ENCODE measurements at regions of chr2 and their contacts with region 1.

Region 1: DNA sequence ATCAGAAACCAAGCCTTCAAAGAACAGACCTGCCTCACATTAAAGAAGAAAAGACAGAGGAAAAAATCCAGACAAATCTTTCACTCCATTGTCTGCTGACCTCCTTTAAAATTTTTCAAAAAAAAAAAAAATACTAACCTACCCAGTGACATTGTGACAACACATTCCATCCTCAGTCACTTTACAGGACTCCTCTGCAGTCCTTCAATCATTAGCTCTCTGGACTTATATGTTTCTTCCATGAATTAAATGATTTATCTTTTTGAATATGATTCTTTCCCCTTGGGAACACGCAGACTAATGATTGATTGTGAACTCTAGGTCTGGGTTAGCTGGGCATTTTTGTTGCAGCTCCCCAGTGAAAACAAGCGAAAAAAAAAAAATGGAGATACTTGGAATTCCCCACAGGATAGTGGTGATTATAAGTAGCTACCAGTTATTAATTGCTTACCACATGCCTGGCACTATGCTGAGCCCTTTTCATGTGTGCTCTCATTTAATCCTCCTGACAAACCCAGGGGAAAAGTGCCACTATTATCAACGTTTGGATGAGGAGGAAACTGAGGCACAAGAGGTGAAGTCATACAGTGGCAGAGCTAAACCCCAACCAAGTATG is 261.3 kb upstream of the NCKAP5 start:
- DNase-seq: no peak
- ATAC-seq: no peak
- H3K4me3 Mint-ChIP-seq: no peak overlapping the region
- H3K27ac Mint-ChIP-seq: no peak overlapping the region
- H3K4me1 Mint-ChIP-seq: no peaks in the 10 kb centered on the region
- H3K27me3 Mint-ChIP-seq: peaks cover under 1% of the 10 kb centered on the region

Region 2: GRCh38 chr2:133346654-133347053 is 482.9 kb before region 1 on chr2:
- CTCF ChIA-PET with region 1: no interaction called
- POLR2A ChIA-PET with region 1: no interaction called
- intact Hi-C with region 1: no loop called
- DNase-seq: no peak
- ATAC-seq: no peak
- H3K4me3 Mint-ChIP-seq: no peak overlapping the region
- H3K27ac Mint-ChIP-seq: no peak overlapping the region
- H3K4me1 Mint-ChIP-seq: no peaks in the 10 kb centered on the region
- H3K27me3 Mint-ChIP-seq: peaks cover 4% of the 10 kb centered on the region

Region 3: GRCh38 chr2:133609664-133610063 is 219.9 kb before region 1 on chr2:
- CTCF ChIA-PET with region 1: no interaction called
- POLR2A ChIA-PET with region 1: no interaction called
- intact Hi-C with region 1: loop called in 1 of 2 experiments (anchors 5 kb)
- DNase-seq: no peak
- ATAC-seq: no peak
- H3K4me3 Mint-ChIP-seq: no peak overlapping the region
- H3K27ac Mint-ChIP-seq: no peak overlapping the region
- H3K4me1 Mint-ChIP-seq: no peaks in the 10 kb centered on the region
- H3K27me3 Mint-ChIP-seq: peaks cover 4% of the 10 kb centered on the region

Region 4: DNA sequence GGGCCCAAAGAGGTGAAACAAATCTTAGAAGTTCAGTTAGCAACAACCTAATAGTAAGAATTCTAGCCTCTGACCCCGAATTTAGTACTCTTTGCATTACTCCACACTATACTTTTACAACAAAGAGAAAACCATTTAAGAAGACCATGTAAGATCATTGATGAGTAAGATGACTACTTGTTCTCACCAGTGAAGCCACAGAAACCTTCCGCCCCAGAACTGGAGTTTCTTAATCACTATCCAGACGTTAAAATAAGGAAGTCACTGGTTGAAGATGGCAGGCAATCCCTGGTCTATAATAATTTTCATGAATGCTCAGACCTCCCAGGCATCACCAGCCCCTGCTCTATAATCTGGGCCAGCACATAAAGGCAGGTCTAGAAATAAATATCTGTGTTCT is 794.2 kb after region 1 on chr2:
- CTCF ChIA-PET with region 1: no interaction called
- POLR2A ChIA-PET with region 1: no interaction called
- intact Hi-C with region 1: no loop called
- DNase-seq: peak; percentile 69
- ATAC-seq: peak; percentile 88
- H3K4me3 Mint-ChIP-seq: no peak overlapping the region
- H3K27ac Mint-ChIP-seq: no peak overlapping the region
- H3K4me1 Mint-ChIP-seq: peaks cover 9% of the 10 kb centered on the region
- H3K27me3 Mint-ChIP-seq: peaks cover 7% of the 10 kb centered on the region

Measured in activated CD4-positive, alpha-beta T cell treated with anti-CD3 and anti-CD28 coated beads for 36 hours (primary cell).